Mammary epithelial cell (primary cell): ENCODE measurements at regions of chr1 and their contacts with region 1.

Region 1: DNA sequence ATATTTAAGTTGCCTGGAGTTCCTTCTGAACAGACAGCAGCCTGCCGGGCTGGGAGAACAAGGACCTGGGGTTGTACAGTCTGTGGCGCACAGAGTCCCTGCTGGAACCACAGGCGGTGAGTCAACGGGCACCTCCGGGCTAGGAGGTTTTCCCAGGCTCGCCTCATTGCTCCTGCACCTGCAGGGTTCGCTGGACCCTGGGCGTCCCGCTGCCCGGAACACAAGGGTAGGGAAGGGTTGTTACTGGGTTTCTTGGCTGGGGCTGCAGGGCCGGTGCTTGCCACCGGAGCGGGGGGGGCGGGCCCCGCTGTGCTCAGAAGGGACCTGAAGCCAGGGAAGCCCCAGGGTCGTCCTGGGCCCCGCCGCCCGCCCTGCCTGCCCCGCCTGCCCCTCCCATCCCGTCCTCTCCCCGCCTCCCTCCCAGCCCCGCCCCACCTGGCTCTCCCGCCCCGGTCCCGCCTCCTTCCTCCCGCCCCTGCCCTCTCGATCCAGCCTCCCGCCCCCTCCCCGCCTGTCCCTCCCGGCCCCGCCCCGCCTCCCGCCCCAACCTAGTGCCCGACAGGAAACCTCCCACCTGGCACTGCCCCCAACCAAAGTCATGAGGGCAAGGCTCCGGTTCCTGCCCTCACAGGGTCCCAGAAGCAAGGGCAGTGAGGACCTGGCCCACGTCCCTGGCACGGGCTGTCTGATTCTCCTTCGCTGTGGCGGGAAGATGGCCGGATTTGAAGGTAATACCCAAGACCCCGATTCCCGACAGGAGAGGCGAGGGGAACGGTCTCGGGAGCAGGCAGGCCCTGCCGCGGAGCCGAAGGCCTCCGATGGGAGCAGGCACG is 6.8 kb downstream of the JMJD4 start:
- DNase-seq: peak; percentile 85
- H3K4me3 ChIP-seq: peak overlapping the region; percentile 32 to 59 (median 53)
- H3K27ac ChIP-seq: no peak overlapping the region
- H3K4me1 ChIP-seq: peaks cover 20% of the 10 kb centered on the region
- H3K27me3 ChIP-seq: no peaks in the 10 kb centered on the region
- CTCF ChIP-seq: peak in 1 of 2 donors; percentile 4

Region 2: GRCh38 chr1:227482023-227482299 is 246.3 kb before region 1 on chr1:
- CTCF ChIA-PET with region 1: no interaction called
- dilution Hi-C with region 1: no loop called
- in situ Hi-C with region 1: no loop called
- intact Hi-C with region 1: loop called (anchors 5 kb)
- DNase-seq: no peak
- H3K4me3 ChIP-seq: no peak overlapping the region
- H3K27ac ChIP-seq: no peak overlapping the region
- H3K4me1 ChIP-seq: no peaks in the 10 kb centered on the region
- H3K27me3 ChIP-seq: peaks cover 6% of the 10 kb centered on the region
- CTCF ChIP-seq: no peak

Region 3: GRCh38 chr1:227787513-227788270 is 59.4 kb after region 1 on chr1:
- CTCF ChIA-PET with region 1: no interaction called
- dilution Hi-C with region 1: no loop called
- in situ Hi-C with region 1: no loop called
- intact Hi-C with region 1: no loop called
- DNase-seq: peak; percentile 96
- H3K4me3 ChIP-seq: peak overlapping the region; percentile 46 to 84 (median 69)
- H3K27ac ChIP-seq: peak overlapping the region; percentile 50
- H3K4me1 ChIP-seq: peaks cover 22% of the 10 kb centered on the region
- H3K27me3 ChIP-seq: no peaks in the 10 kb centered on the region
- CTCF ChIP-seq: no peak